SK-N-SH (cell line): ENCODE measurements at regions of chr11 and their contacts with region 1.

Region 1: GRCh38 chr11:3807909-3808860 is at the start of gene PGAP2:
- DNase-seq: peak; percentile 90
- H3K4me3 ChIP-seq: peak within 1 kb of the TSS; percentile 70 to 83
- H3K27ac ChIP-seq: peak within 1 kb of the TSS in 1 of 2 experiments; percentile 56; a peak in 2 of 4 replicates
- H3K4me1 ChIP-seq: peaks cover 3 to 8% of the 10 kb centered on the region in 2 experiments; a peak in 3 of 4 replicates
- H3K27me3 ChIP-seq: no peaks in the 10 kb centered on the region
- CTCF ChIP-seq: peak; percentile 74
- EP300 ChIP-seq: no peak
- RAD21 ChIP-seq: peak; percentile 66
- polyA plus RNA-seq, gene PGAP2: 41.3 and 44.1 TPM in 2 replicates

Region 2: GRCh38 chr11:3753110-3753509 is 55.1 kb before region 1 on chr11:
- CTCF ChIA-PET with region 1: no interaction called
- POLR2A ChIA-PET with region 1: no interaction called
- DNase-seq: no peak
- H3K4me3 ChIP-seq: no peak overlapping the region
- H3K27ac ChIP-seq: no peak overlapping the region
- H3K4me1 ChIP-seq: no peaks in the 10 kb centered on the region
- H3K27me3 ChIP-seq: no peaks in the 10 kb centered on the region
- CTCF ChIP-seq: no peak
- EP300 ChIP-seq: no peak
- RAD21 ChIP-seq: no peak

Region 3: DNA sequence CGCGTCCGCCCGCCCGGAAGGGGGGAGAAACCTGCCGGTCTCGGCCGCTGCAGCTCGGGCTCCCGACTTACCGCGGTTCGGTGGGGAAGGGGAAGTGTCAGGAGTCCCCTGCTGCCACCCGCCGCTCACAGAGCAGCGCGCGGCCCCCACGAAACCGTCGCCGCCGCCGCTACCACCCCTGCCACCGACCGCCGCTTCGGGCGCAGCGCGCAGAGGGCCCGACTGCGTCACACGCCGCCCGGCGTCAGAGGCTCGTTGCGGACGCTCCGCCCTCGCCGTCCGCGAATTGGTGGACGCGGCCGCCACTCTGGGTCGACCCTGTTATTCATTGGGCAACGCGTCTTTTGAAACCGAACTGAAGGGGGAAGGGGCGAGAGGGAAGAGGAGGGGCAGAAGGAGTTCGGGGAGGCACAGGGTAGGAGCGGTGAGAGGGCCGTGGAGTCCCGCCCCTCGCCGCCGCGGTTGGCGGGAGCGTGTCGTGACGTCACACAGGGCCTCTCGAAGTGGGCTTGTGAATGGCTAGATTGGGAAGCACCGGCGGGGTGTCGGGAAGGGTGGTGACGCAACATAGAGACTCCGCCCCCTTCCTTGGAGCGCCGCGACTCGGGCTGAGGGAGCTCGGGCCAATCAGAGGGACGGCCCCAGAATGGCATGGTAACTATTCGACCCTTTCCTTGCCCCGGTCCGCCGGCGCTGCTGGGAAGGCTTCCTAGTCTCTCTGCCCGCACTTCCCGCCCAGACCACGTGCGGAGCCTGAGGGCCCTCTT is 10.7 kb before region 1 on chr11 and contains the start of gene NUP98:
- CTCF ChIA-PET with region 1: interaction called, 34 read pairs
- POLR2A ChIA-PET with region 1: interaction called, 4 read pairs
- DNase-seq: peak; percentile 97
- H3K4me3 ChIP-seq: peak within 1 kb of the TSS; percentile 73 to 81
- H3K27ac ChIP-seq: peak within 1 kb of the TSS; percentile 89
- H3K4me1 ChIP-seq: peaks cover 0 to 5% of the 10 kb centered on the region in 2 experiments; a peak in 2 of 4 replicates
- H3K27me3 ChIP-seq: no peaks in the 10 kb centered on the region
- CTCF ChIP-seq: no peak
- EP300 ChIP-seq: no peak
- RAD21 ChIP-seq: no peak
- polyA plus RNA-seq, gene NUP98: 56.4 and 75.6 TPM in 2 replicates

Region 4: DNA sequence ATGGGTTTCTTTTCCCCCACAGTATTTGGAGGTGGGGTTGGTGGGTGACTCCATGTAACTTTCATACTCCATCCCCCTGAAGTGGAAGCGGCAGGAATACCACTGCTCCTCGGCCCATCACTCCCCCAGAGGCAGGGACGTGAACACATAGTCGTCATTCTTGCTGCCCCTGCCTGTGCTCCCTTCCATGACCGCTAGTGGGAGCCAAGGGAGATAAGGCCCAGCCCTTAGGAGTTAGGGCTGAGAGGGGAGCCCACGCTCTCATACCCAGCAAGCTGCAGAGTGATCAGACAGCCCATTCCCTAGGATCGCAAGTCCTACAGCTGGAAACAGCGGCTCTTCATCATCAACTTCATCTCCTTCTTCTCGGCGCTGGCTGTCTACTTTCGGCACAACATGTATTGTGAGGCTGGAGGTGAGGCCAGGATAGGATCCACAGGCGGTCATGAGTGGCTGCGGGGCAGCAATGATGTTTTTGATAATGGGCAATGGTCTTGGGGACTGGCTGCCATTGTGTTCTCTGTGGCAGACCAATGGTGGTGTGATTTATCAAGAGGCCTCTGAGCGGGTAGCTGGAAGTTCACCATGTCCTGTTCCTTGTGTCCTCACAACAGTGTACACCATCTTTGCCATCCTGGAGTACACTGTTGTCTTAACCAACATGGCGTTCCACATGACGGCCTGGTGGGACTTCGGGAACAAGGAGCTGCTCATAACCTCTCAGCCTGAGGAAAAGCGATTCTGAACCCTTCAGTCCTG is 16.7 kb after region 1 on chr11:
- CTCF ChIA-PET with region 1: interaction called, 27 read pairs
- POLR2A ChIA-PET with region 1: interaction called, 3 read pairs
- DNase-seq: peak; percentile 58
- H3K4me3 ChIP-seq: no peak overlapping the region; a peak in 1 of 4 replicates
- H3K27ac ChIP-seq: no peak overlapping the region
- H3K4me1 ChIP-seq: no peaks in the 10 kb centered on the region
- H3K27me3 ChIP-seq: no peaks in the 10 kb centered on the region
- CTCF ChIP-seq: peak; percentile 52
- EP300 ChIP-seq: no peak
- RAD21 ChIP-seq: no peak

Region 5: DNA sequence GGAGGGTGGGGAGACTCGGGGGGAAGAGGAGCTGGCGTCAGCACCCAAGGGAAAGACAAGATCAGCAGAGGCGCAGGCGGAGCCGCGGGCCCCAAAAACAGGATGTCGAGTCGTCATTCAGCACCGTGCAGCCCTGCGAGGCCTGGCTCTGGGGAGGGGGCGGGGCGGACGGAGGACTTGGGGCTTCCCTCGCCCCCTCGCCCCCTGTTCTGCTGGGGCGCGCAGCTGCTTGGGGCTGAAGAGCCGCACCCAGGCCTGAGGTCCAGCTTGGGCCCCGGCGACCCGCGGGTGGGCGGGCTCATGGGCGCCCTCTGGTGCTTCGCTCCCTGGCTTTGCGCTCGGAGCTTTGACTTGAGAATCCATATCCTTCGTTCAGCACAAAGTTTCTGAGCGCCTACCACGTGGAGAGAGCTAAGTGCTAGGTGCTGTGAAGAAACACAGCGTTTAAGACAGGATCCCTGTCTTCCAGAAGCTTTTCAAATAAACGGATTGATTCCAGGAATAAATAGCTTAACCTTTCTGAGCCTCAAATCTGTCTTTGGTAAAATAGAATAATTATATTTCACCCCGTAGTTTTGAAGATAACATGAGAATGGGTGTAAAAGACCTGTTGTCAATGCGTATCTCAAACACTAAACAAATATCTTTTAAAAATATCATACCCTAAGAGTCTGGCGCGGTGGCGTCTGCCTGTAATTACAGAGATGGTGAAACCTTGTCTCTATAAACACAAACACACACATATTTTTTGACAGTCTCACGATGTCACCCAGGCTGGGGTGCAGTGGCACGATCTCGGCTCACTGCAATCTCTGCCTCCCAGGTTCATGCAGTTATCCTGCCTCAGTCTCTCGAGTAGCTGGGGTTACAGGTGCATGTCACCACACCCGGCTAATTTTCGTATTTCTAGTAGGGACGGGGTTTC is 33.5 kb after region 1 on chr11:
- CTCF ChIA-PET with region 1: interaction called, 30 read pairs
- POLR2A ChIA-PET with region 1: interaction called, 5 read pairs
- DNase-seq: peak; percentile 87
- H3K4me3 ChIP-seq: peak overlapping the region; percentile 67 to 71
- H3K27ac ChIP-seq: peak overlapping the region; percentile 82 to 84
- H3K4me1 ChIP-seq: peaks cover 5 to 17% of the 10 kb centered on the region in 2 experiments; a peak in 2 of 4 replicates
- H3K27me3 ChIP-seq: no peaks in the 10 kb centered on the region
- CTCF ChIP-seq: peak; percentile 80
- EP300 ChIP-seq: no peak
- RAD21 ChIP-seq: peak; percentile 50

Region 6: DNA sequence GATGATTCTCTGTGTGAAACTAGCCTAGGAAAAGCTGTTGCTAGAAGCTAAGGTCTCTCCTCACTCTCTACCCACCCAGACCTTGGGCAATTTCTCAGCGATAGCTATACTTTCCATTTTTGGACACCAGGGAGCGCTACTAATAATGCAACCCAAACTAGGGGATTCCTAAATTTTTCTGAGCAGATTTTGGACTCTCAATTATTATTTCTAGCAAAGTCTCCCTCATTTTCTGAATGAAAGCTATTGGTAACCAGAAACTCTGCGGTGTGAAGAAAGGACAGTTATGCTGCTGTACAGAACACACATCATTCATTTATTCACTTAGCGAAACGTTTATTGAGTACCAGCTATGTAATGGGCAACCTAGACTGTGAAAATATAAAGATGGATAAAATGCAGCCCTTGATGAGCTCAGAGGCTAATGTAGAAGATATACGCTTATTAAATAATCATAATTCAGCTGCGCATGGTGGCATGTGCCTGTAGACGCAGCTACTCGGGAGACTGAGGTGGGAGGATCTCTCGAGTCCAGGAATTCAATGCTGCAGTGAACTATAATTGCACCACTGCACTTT is 41.2 kb after region 1 on chr11:
- CTCF ChIA-PET with region 1: interaction called, 23 read pairs
- POLR2A ChIA-PET with region 1: interaction called, 3 read pairs
- DNase-seq: peak; percentile 53
- H3K4me3 ChIP-seq: peak overlapping the region in 1 of 2 experiments; percentile 23; a peak in 1 of 4 replicates
- H3K27ac ChIP-seq: no peak overlapping the region
- H3K4me1 ChIP-seq: peaks cover under 1 to 3% of the 10 kb centered on the region in 2 experiments; a peak in 2 of 4 replicates
- H3K27me3 ChIP-seq: no peaks in the 10 kb centered on the region
- CTCF ChIP-seq: peak; percentile 80
- EP300 ChIP-seq: no peak
- RAD21 ChIP-seq: peak; percentile 69

Region 7: DNA sequence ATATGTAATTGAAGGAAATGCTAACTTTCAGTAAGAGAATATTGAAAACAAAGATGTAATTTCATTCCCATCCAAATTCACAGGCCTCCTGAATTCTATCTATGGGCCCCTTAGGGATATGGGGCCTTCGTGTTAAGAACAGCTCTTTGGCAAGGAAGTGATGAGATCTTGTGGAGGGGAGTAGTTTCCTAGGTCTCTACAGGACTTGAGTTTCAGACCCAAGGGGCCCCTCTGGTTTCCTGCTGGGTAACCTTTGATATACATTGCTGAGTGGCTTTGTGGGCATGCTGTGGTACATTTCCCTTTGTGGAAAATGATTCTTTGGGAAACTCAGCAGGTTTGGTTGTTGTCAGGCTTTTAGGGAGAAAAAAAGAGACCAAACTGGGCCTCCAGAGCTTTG is 53.5 kb after region 1 on chr11:
- CTCF ChIA-PET with region 1: no interaction called
- POLR2A ChIA-PET with region 1: no interaction called
- DNase-seq: no peak
- H3K4me3 ChIP-seq: no peak overlapping the region
- H3K27ac ChIP-seq: no peak overlapping the region
- H3K4me1 ChIP-seq: peaks cover 13 to 24% of the 10 kb centered on the region in 2 experiments; a peak in 3 of 4 replicates
- H3K27me3 ChIP-seq: no peaks in the 10 kb centered on the region
- CTCF ChIP-seq: no peak
- EP300 ChIP-seq: no peak
- RAD21 ChIP-seq: no peak

Region 8: GRCh38 chr11:4211991-4212390 is 403.8 kb after region 1 on chr11:
- CTCF ChIA-PET with region 1: no interaction called
- POLR2A ChIA-PET with region 1: no interaction called
- DNase-seq: peak; percentile 38
- H3K4me3 ChIP-seq: no peak overlapping the region
- H3K27ac ChIP-seq: no peak overlapping the region
- H3K4me1 ChIP-seq: no peaks in the 10 kb centered on the region
- H3K27me3 ChIP-seq: peaks cover 56% of the 10 kb centered on the region
- CTCF ChIP-seq: no peak
- EP300 ChIP-seq: no peak
- RAD21 ChIP-seq: no peak